Panc1 (cell line): ENCODE measurements at regions of chr1 and their contacts with region 1.

Region 1: DNA sequence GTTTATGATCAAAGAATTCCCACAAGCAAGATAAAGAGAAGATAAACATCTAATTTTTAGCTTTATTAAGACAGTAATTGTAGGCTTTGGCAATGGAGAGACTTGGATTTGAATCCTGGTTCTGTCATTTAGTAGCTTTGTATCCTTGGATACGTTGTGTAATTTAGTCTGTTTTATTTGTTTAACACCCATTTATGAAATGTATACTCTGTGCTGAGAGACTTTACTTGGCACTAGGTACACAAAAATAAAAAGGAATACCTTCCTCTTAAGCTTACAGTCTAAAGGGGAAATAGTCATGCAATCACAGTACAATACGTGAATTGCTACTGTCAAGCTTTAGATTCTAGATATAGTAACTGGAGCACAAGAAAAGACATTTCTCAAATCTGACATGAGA is 23.8 kb downstream of the ZMPSTE24 start:
- DNase-seq: no peak
- ATAC-seq: no peak
- H3K4me3 ChIP-seq: no peak overlapping the region
- H3K27ac ChIP-seq: no peak overlapping the region
- H3K4me1 ChIP-seq: no peaks in the 10 kb centered on the region
- H3K27me3 ChIP-seq: no peaks in the 10 kb centered on the region
- CTCF ChIP-seq: no peak

Region 2: GRCh38 chr1:40132383-40133311 is 149.2 kb before region 1 on chr1:
- CTCF ChIA-PET with region 1: no interaction called
- POLR2A ChIA-PET with region 1: no interaction called
- in situ Hi-C with region 1: no loop called
- intact Hi-C with region 1: no loop called
- DNase-seq: no peak
- ATAC-seq: no peak
- H3K4me3 ChIP-seq: no peak overlapping the region
- H3K27ac ChIP-seq: no peak overlapping the region
- H3K4me1 ChIP-seq: no peaks in the 10 kb centered on the region
- H3K27me3 ChIP-seq: no peaks in the 10 kb centered on the region
- CTCF ChIP-seq: no peak

Region 3: DNA sequence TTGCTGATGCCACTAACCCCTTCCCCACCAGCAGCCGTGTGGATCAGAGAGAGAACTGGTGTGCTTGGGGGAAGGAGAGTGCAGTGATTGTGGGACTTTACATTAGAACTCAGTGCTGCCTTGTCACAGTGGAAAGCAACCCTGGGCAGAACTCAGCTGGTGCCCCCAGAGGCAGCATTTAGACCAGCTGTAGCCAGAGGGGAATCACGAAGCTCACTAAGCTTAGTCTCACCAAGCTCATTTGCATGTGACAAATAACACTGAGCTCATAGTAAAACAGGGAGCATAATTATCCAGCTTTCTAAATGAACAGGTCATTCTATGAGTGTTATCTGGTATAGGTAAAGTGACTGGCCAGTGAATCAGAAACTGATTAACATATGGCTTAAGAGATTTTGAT is 81.9 kb after region 1 on chr1:
- CTCF ChIA-PET with region 1: no interaction called
- POLR2A ChIA-PET with region 1: no interaction called
- in situ Hi-C with region 1: no loop called
- intact Hi-C with region 1: no loop called
- DNase-seq: no peak
- ATAC-seq: no peak; the same call in 1 of the 2 replicates
- H3K4me3 ChIP-seq: no peak overlapping the region
- H3K27ac ChIP-seq: no peak overlapping the region
- H3K4me1 ChIP-seq: no peaks in the 10 kb centered on the region
- H3K27me3 ChIP-seq: no peaks in the 10 kb centered on the region
- CTCF ChIP-seq: no peak

Region 4: GRCh38 chr1:40435471-40435870 is 153.6 kb after region 1 on chr1:
- CTCF ChIA-PET with region 1: interaction called, 10 read pairs
- POLR2A ChIA-PET with region 1: no interaction called
- in situ Hi-C with region 1: no loop called
- intact Hi-C with region 1: no loop called
- DNase-seq: no peak
- ATAC-seq: no peak
- H3K4me3 ChIP-seq: no peak overlapping the region
- H3K27ac ChIP-seq: no peak overlapping the region
- H3K4me1 ChIP-seq: no peaks in the 10 kb centered on the region
- H3K27me3 ChIP-seq: no peaks in the 10 kb centered on the region
- CTCF ChIP-seq: no peak